ENCODE measurements at regions of chrX and their contacts with region 1.

Region 1: DNA sequence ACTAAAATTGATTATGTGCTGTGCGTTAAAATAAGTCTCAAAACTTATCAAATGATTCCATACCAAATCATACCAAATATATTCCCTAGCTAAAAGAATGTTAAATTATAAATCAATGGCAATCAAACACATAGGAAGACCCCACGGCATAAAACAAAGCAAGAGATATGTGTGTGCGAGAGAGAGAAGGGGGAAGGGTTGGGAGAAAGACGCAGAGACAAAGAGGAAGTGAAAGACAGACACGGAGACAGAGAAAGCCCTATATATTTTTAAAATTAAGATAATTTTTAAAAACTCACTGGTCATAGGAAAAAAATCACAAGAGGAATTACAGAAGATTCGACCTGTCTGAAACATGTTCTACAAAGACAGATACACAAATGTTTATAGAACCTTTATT is 371.4 kb downstream of the NLGN4X start:
- DNase-seq: no peak
- ATAC-seq: no peak
- H3K4me3 ChIP-seq: no peak overlapping the region
- H3K27ac ChIP-seq: no peak overlapping the region
- H3K4me1 ChIP-seq: no peaks in the 10 kb centered on the region
- H3K27me3 ChIP-seq: no peaks in the 10 kb centered on the region
- CTCF ChIP-seq: no peak

Region 2: GRCh38 chrX:5290635-5291034 is 566.6 kb before region 1 on chrX:
- intact Hi-C with region 1: no loop called
- DNase-seq: no peak
- ATAC-seq: no peak
- H3K4me3 ChIP-seq: no peak overlapping the region
- H3K27ac ChIP-seq: no peak overlapping the region
- H3K4me1 ChIP-seq: no peaks in the 10 kb centered on the region
- H3K27me3 ChIP-seq: no peaks in the 10 kb centered on the region
- CTCF ChIP-seq: no peak

Region 3: DNA sequence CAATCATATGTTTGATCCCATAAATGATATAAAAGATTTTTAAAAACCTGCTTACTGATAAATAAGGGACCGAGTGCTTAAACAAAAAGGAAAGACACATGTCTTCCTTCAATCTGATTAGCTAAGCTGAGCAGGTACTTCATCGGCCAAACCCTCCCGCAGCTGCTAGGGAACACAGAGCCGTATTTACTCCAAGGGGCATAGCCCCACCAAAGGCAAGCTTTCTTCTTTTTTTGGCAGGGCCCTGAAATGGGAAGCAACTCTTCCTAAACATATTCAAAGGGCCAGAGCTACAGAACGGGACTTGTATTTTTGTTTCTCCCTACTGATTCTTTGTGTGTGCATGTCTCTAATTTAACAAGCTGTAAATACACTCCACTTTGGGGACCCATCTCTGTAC is 34.1 kb after region 1 on chrX:
- intact Hi-C with region 1: loop called in 1 of 3 experiments (anchors 1 kb)
- DNase-seq: no peak
- ATAC-seq: no peak
- H3K4me3 ChIP-seq: no peak overlapping the region
- H3K27ac ChIP-seq: no peak overlapping the region
- H3K4me1 ChIP-seq: no peaks in the 10 kb centered on the region
- H3K27me3 ChIP-seq: peaks cover 0 to 8% (median 0%) of the 10 kb centered on the region in 4 donors
- CTCF ChIP-seq: no peak

Measured in pancreas (tissue), 10 donors.